Naive thymus-derived CD4-positive, alpha-beta T cell (primary cell): ENCODE measurements at regions of chr2 and their contacts with region 1.

Region 1: GRCh38 chr2:195656859-195657633 is at the start of gene SLC39A10:
- DNase-seq: peak; percentile 95 to 100 (median 98)
- ATAC-seq: peak; percentile 86
- H3K4me3 ChIP-seq: peak within 1 kb of the TSS; percentile 81
- H3K4me3 Mint-ChIP-seq: peak within 1 kb of the TSS; percentile 95 to 100 (median 99)
- H3K27ac ChIP-seq: peak within 1 kb of the TSS; percentile 99
- H3K27ac Mint-ChIP-seq: peak within 1 kb of the TSS; percentile 100
- H3K4me1 ChIP-seq: peaks cover 3 to 24% of the 10 kb centered on the region in 2 donors
- H3K4me1 Mint-ChIP-seq: peaks cover 7 to 36% (median 30%) of the 10 kb centered on the region in 7 donors
- H3K27me3 ChIP-seq: no peaks in the 10 kb centered on the region
- H3K27me3 Mint-ChIP-seq: peaks cover 0 to 9% (median 0%) of the 10 kb centered on the region in 5 donors
- total RNA-seq, gene SLC39A10: 48.3 to 92.9 (median 60.7) TPM

Region 2: GRCh38 chr2:195382186-195382585 is 274.9 kb before region 1 on chr2:
- CTCF ChIA-PET with region 1: no interaction called
- POLR2A ChIA-PET with region 1: no interaction called
- intact Hi-C with region 1: loop called in 1 of 2 experiments (anchors 10 kb)
- DNase-seq: peak in 8 of 9 donors; percentile 27 to 64 (median 58)
- ATAC-seq: peak; percentile 90
- H3K4me3 ChIP-seq: no peak overlapping the region
- H3K4me3 Mint-ChIP-seq: peak overlapping the region in 6 of 10 donors; percentile 2 to 66 (median 30)
- H3K27ac ChIP-seq: no peak overlapping the region
- H3K27ac Mint-ChIP-seq: peak overlapping the region in 8 of 9 donors; percentile 7 to 90 (median 76)
- H3K4me1 ChIP-seq: peaks cover 0 to 13% of the 10 kb centered on the region in 2 donors
- H3K4me1 Mint-ChIP-seq: peaks cover 8 to 43% (median 24%) of the 10 kb centered on the region in 7 donors
- H3K27me3 ChIP-seq: no peaks in the 10 kb centered on the region
- H3K27me3 Mint-ChIP-seq: no peaks in the 10 kb centered on the region

Region 3: GRCh38 chr2:195533771-195534642 is 123.0 kb before region 1 on chr2:
- CTCF ChIA-PET with region 1: interaction called, 28 read pairs
- POLR2A ChIA-PET with region 1: interaction called, 196 read pairs
- intact Hi-C with region 1: loop called (anchors 1 kb)
- DNase-seq: peak in 8 of 9 donors; percentile 28 to 63 (median 42)
- ATAC-seq: peak; percentile 48
- H3K4me3 ChIP-seq: peak overlapping the region; percentile 51
- H3K4me3 Mint-ChIP-seq: peak overlapping the region; percentile 77 to 95 (median 90)
- H3K27ac ChIP-seq: peak overlapping the region; percentile 77
- H3K27ac Mint-ChIP-seq: peak overlapping the region; percentile 92 to 100 (median 98)
- H3K4me1 ChIP-seq: peaks cover 70 to 73% of the 10 kb centered on the region in 2 donors
- H3K4me1 Mint-ChIP-seq: peaks cover 69 to 90% (median 86%) of the 10 kb centered on the region in 7 donors
- H3K27me3 ChIP-seq: no peaks in the 10 kb centered on the region
- H3K27me3 Mint-ChIP-seq: no peaks in the 10 kb centered on the region

Region 4: DNA sequence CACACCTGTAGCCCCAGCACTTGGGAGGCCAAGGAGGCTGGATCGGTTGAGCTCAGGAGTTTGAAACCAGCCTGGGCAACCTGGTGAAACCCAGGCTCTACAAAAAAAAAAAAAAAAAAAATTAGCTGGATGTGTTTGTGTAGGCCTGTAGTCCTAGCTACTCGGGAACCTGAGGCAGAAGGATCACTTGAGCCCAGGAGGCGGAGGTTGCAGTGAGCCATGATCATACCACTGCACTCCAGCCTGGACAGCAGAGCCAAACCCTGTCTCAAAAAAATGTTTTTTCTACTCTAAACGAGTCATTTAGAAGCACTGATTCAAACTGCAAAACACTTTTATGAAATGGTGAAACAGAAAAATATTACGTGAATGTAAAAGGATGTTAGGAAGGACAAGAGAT is 69.1 kb before region 1 on chr2:
- CTCF ChIA-PET with region 1: interaction called, 10 read pairs
- POLR2A ChIA-PET with region 1: interaction called, 9 read pairs
- intact Hi-C with region 1: no loop called
- DNase-seq: no peak
- ATAC-seq: no peak
- H3K4me3 ChIP-seq: no peak overlapping the region
- H3K4me3 Mint-ChIP-seq: no peak overlapping the region
- H3K27ac ChIP-seq: no peak overlapping the region
- H3K27ac Mint-ChIP-seq: peak overlapping the region in 1 of 9 donors; percentile 25
- H3K4me1 ChIP-seq: no peaks in the 10 kb centered on the region
- H3K4me1 Mint-ChIP-seq: peaks cover 5 to 39% (median 12%) of the 10 kb centered on the region in 7 donors
- H3K27me3 ChIP-seq: no peaks in the 10 kb centered on the region
- H3K27me3 Mint-ChIP-seq: no peaks in the 10 kb centered on the region

Region 5: DNA sequence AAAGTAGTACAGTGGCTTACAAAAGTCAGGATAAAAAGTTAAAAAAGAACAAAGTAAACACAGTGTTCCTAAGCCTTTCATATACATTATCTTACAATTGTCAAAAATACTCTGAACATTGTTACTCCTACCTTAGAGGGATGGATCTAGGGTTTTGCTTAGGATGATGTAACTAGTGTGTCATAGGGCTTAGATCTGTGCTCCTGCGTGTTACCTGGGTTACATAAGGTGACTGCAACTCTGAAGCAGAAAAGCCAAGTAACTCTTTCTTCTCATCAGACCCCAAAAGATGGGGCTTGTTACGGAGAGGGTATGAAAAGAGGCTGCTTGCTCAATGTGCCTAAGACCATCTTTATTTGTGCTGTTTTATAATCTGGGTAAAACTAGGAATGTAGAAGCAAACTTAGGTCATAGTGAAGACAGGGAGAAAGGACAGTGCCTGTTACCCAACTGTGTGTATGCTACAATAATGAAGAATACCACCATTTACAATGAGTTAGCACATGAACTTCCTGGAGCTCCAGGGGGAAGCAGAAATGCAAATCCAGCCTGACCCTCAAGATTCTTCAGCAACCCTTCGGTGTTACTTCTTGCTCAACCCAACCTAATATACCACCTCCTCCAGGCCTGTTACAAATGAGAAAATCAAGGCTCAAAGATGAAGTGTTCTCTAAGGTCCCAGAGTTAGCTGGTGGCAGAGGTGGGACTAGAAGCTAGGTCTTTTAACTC is 556.4 kb after region 1 on chr2:
- CTCF ChIA-PET with region 1: no interaction called
- POLR2A ChIA-PET with region 1: interaction called, 3 read pairs
- intact Hi-C with region 1: loop called in 1 of 2 experiments (anchors 5 kb)
- DNase-seq: peak in 7 of 9 donors; percentile 29 to 77 (median 58)
- ATAC-seq: peak; percentile 36
- H3K4me3 ChIP-seq: no peak overlapping the region
- H3K4me3 Mint-ChIP-seq: peak overlapping the region in 9 of 10 donors; percentile 0 to 94 (median 61)
- H3K27ac ChIP-seq: peak overlapping the region; percentile 78
- H3K27ac Mint-ChIP-seq: peak overlapping the region in 8 of 9 donors; percentile 95 to 100 (median 98)
- H3K4me1 ChIP-seq: peaks cover 14 to 57% of the 10 kb centered on the region in 2 donors
- H3K4me1 Mint-ChIP-seq: peaks cover 51 to 96% (median 94%) of the 10 kb centered on the region in 7 donors
- H3K27me3 ChIP-seq: no peaks in the 10 kb centered on the region
- H3K27me3 Mint-ChIP-seq: no peaks in the 10 kb centered on the region

Region 6: DNA sequence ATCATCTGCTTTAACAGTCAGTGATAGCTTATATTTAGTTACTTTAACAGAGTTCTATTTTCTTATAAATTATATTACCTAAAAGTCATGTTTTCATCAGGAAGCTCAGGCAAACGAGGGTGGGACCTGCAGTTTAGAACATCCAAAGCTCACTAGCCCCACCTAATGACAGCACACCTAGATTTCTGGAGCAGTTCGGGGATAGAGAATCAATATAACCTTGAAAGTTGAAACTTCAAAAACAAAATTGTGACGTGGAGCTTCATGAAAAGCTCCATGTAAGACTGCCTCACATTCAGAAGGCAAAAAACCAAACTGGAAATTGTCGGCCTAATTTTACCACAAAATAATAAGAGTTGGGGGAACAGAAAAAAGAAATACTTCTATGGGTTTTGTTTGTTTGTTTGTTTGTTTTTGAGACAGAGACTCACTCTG is 796.6 kb after region 1 on chr2:
- CTCF ChIA-PET with region 1: no interaction called
- POLR2A ChIA-PET with region 1: no interaction called
- intact Hi-C with region 1: loop called in 1 of 2 experiments (anchors 2 kb)
- DNase-seq: peak in 7 of 9 donors; percentile 2 to 39 (median 19)
- ATAC-seq: peak; percentile 60
- H3K4me3 ChIP-seq: no peak overlapping the region
- H3K4me3 Mint-ChIP-seq: no peak overlapping the region
- H3K27ac ChIP-seq: no peak overlapping the region
- H3K27ac Mint-ChIP-seq: no peak overlapping the region
- H3K4me1 ChIP-seq: no peaks in the 10 kb centered on the region
- H3K4me1 Mint-ChIP-seq: peaks cover 0 to 6% (median 0%) of the 10 kb centered on the region in 7 donors
- H3K27me3 ChIP-seq: peaks cover 0 to 6% of the 10 kb centered on the region in 2 donors
- H3K27me3 Mint-ChIP-seq: peaks cover 25 to 42% (median 31%) of the 10 kb centered on the region in 5 donors